B cell (primary cell): ENCODE measurements at regions of chr20 and their contacts with region 1.

Region 1: DNA sequence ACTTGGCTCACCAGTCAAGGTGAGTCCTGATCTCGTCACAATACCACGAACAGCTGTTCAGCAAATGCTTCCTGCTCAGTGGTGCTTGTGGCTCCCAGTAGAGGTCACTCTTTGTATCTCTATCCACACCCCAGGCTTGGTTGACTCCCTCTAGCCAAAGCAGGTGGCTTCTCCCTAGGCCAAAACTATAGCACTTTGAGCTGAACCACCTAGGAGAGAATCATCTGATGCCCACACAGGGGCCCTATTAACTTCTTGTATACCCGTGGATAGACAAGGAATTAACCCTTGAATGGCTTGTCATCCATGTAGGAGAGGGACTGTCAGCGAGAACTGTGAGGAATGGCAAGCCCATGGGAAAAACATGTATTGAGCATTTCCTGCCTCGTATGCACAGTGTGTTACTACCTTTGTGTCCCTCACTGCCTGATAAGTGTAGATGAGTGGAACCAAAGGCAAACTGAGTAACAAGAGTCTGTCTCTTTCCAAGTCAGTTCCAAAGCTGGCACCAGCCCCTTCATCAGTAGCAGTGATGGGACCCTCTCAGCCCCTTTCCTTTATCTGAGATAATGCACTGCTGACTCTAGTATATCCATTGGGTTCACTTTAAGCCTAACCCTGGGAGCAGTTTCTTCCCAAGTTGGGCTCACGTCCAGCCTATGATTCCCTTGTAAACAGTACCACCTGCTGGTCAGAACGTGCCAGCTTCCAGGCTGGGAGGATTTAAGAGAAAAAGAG is 42.5 kb downstream of the EIF2S2 start:
- DNase-seq: peak; percentile 75
- ATAC-seq: peak; percentile 90
- H3K4me3 ChIP-seq: no peak overlapping the region
- H3K4me3 Mint-ChIP-seq: no peak overlapping the region
- H3K27ac ChIP-seq: no peak overlapping the region
- H3K27ac Mint-ChIP-seq: peak overlapping the region; percentile 59
- H3K4me1 ChIP-seq: peaks cover 9 to 13% of the 10 kb centered on the region in 2 donors
- H3K4me1 Mint-ChIP-seq: peaks cover 21% of the 10 kb centered on the region
- H3K27me3 ChIP-seq: no peaks in the 10 kb centered on the region
- H3K27me3 Mint-ChIP-seq: no peaks in the 10 kb centered on the region
- CTCF ChIP-seq: peak; percentile 74

Region 2: DNA sequence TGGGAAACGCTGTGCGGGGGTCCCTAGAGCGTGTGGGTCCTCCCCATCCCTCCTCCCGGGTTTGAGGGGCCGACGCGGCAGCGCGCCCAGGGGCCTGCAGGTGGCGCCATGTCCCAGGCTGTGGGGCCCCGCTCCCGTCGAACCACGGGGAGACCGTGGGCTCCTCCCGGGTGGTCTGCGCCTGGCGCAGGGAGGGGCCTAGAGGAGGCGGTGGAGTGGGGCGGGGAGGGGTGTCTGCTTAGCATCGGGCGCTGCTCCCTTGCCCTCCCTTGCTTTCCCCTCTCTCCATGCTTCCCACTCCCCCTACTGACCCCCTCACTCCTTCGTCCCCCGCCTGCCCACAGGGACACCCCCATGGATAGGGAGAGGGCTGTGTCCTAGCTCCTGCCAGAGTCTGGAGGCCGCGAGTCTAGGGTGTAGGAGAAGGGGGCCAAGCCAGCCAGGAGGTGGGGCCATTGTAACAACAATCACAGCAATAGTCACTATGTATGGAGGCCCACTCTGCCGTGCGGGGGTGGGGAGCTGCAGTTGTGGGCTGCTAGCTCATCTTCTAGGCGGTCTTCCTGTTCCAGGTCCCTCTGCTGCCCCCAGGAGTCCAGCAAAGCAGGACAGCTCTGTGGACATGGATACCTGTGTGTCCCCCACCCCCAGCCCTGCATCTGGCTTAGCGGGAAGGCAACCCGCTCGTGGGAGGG is 206.7 kb before region 1 on chr20:
- CTCF ChIA-PET with region 1: interaction called, 30 read pairs
- POLR2A ChIA-PET with region 1: no interaction called
- intact Hi-C with region 1: loop called (anchors 1 kb)
- DNase-seq: peak; percentile 58
- ATAC-seq: peak; percentile 53
- H3K4me3 ChIP-seq: no peak overlapping the region
- H3K4me3 Mint-ChIP-seq: no peak overlapping the region
- H3K27ac ChIP-seq: no peak overlapping the region
- H3K27ac Mint-ChIP-seq: no peak overlapping the region
- H3K4me1 ChIP-seq: peaks cover 25 to 28% of the 10 kb centered on the region in 2 donors
- H3K4me1 Mint-ChIP-seq: peaks cover 26% of the 10 kb centered on the region
- H3K27me3 ChIP-seq: no peaks in the 10 kb centered on the region
- H3K27me3 Mint-ChIP-seq: no peaks in the 10 kb centered on the region
- CTCF ChIP-seq: peak; percentile 79

Region 3: GRCh38 chr20:33915726-33916331 is 153.7 kb before region 1 on chr20:
- CTCF ChIA-PET with region 1: interaction called, 139 read pairs
- POLR2A ChIA-PET with region 1: no interaction called
- intact Hi-C with region 1: loop called (anchors 1 kb)
- DNase-seq: peak; percentile 56
- ATAC-seq: no peak
- H3K4me3 ChIP-seq: no peak overlapping the region
- H3K4me3 Mint-ChIP-seq: no peak overlapping the region
- H3K27ac ChIP-seq: no peak overlapping the region
- H3K27ac Mint-ChIP-seq: no peak overlapping the region
- H3K4me1 ChIP-seq: peaks cover 2 to 15% of the 10 kb centered on the region in 2 donors
- H3K4me1 Mint-ChIP-seq: peaks cover 13% of the 10 kb centered on the region
- H3K27me3 ChIP-seq: peaks cover 0 to 3% (median 0%) of the 10 kb centered on the region in 4 experiments
- H3K27me3 Mint-ChIP-seq: peaks cover 13% of the 10 kb centered on the region
- CTCF ChIP-seq: peak; percentile 74

Region 4: DNA sequence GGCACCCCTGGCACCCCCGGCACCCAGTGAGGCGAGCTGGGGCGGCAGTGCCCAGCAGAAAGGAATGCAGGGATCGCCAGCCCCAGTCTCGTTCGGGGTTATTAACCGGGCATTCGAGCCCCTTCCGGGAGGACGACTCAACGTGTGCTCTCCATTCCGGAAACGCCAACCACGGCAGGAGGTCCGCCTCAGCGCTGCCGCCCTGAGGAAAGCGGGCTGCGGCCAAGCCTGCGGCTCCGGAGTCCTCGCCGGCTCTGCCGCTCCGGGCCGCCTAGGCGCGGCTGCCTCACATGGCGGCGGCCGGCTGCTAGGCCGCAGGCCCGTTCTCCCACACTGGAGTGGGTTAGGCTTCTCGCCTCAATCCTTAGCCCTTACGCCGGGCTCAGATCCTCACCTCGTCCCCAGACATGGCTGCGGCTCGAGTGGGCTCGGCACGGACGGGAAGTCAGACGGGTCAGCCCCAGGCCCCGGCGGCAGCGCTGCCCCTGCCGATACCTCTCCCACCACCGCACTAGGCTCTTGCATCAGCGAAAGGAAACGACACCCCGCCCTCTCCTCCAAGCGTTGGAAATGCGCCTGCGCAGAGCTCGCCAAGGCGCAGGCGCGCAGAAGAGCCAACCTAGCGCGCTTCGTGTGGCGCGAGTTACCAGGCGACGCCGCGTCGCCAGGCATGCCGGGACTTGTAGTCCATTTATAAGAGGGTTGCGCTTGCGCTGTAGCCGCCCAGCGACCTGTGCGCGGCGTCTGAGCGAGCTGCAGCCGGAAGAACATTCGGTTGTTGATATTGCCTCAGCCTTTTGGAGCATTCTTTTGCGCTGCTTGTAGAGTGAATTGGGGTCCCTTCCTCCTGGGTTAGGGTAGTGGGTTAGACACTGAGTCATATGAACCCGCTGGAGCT is 42.4 kb after region 1 on chr20 and contains the start of gene EIF2S2:
- CTCF ChIA-PET with region 1: interaction called, 10 read pairs
- POLR2A ChIA-PET with region 1: no interaction called
- intact Hi-C with region 1: no loop called
- DNase-seq: peak; percentile 99
- ATAC-seq: peak; percentile 91
- H3K4me3 ChIP-seq: peak within 1 kb of the TSS; percentile 63 to 97 (median 90)
- H3K4me3 Mint-ChIP-seq: peak within 1 kb of the TSS; percentile 99
- H3K27ac ChIP-seq: peak within 1 kb of the TSS; percentile 80 to 95
- H3K27ac Mint-ChIP-seq: peak within 1 kb of the TSS; percentile 99
- H3K4me1 ChIP-seq: peaks cover 21 to 28% of the 10 kb centered on the region in 2 donors
- H3K4me1 Mint-ChIP-seq: peaks cover 45% of the 10 kb centered on the region
- H3K27me3 ChIP-seq: no peaks in the 10 kb centered on the region
- H3K27me3 Mint-ChIP-seq: no peaks in the 10 kb centered on the region
- CTCF ChIP-seq: no peak
- total RNA-seq, gene EIF2S2: 26.4 and 27.7 TPM in 2 replicates

Region 5: GRCh38 chr20:34334654-34335407 is 265.3 kb after region 1 on chr20:
- CTCF ChIA-PET with region 1: no interaction called
- POLR2A ChIA-PET with region 1: no interaction called
- intact Hi-C with region 1: no loop called
- DNase-seq: no peak
- ATAC-seq: no peak
- H3K4me3 ChIP-seq: no peak overlapping the region
- H3K4me3 Mint-ChIP-seq: no peak overlapping the region
- H3K27ac ChIP-seq: no peak overlapping the region
- H3K27ac Mint-ChIP-seq: no peak overlapping the region
- H3K4me1 ChIP-seq: peaks cover 0 to 15% of the 10 kb centered on the region in 2 donors
- H3K4me1 Mint-ChIP-seq: peaks cover 10% of the 10 kb centered on the region
- H3K27me3 ChIP-seq: no peaks in the 10 kb centered on the region
- H3K27me3 Mint-ChIP-seq: no peaks in the 10 kb centered on the region
- CTCF ChIP-seq: no peak

Region 6: GRCh38 chr20:35055445-35056276 is 986.2 kb after region 1 on chr20:
- CTCF ChIA-PET with region 1: no interaction called
- POLR2A ChIA-PET with region 1: no interaction called
- intact Hi-C with region 1: no loop called
- DNase-seq: no peak
- ATAC-seq: peak; percentile 17
- H3K4me3 ChIP-seq: peak overlapping the region in 1 of 5 experiments; percentile 5
- H3K4me3 Mint-ChIP-seq: peak overlapping the region; percentile 73
- H3K27ac ChIP-seq: peak overlapping the region in 1 of 2 donors; percentile 42
- H3K27ac Mint-ChIP-seq: peak overlapping the region; percentile 66
- H3K4me1 ChIP-seq: peaks cover 0 to 5% of the 10 kb centered on the region in 2 donors
- H3K4me1 Mint-ChIP-seq: peaks cover 21% of the 10 kb centered on the region
- H3K27me3 ChIP-seq: no peaks in the 10 kb centered on the region
- H3K27me3 Mint-ChIP-seq: no peaks in the 10 kb centered on the region
- CTCF ChIP-seq: no peak